ENCODE measurements at regions of chr9 and their contacts with region 1.

Region 1: DNA sequence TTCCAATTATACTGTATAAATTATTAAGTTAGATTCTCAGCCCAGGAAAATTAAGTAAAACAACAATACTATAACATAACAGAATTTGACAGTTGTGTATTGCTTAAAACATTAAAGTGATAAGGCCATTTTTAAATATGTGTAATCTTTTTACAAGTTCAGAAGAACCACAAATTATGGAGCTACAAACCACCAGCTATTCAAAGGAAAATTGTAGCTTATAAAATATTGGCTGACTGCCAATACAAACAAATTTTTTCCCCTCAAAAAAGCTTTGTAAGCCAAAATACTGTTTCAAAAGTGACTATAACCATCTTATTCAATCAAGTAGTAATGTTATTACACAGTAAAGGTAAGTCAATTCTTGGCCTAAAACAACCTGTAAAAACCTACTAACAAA is 21.9 kb downstream of the STRBP start:
- DNase-seq: no peak
- ATAC-seq: no peak
- H3K4me3 ChIP-seq: no peak overlapping the region
- H3K4me3 Mint-ChIP-seq: no peak overlapping the region
- H3K27ac ChIP-seq: peak overlapping the region in 1 of 2 donors; percentile 1
- H3K27ac Mint-ChIP-seq: no peak overlapping the region
- H3K4me1 ChIP-seq: peaks cover 12 to 35% of the 10 kb centered on the region in 2 donors
- H3K4me1 Mint-ChIP-seq: peaks cover 82% of the 10 kb centered on the region
- H3K27me3 ChIP-seq: no peaks in the 10 kb centered on the region
- H3K27me3 Mint-ChIP-seq: no peaks in the 10 kb centered on the region
- CTCF ChIP-seq: no peak

Region 2: DNA sequence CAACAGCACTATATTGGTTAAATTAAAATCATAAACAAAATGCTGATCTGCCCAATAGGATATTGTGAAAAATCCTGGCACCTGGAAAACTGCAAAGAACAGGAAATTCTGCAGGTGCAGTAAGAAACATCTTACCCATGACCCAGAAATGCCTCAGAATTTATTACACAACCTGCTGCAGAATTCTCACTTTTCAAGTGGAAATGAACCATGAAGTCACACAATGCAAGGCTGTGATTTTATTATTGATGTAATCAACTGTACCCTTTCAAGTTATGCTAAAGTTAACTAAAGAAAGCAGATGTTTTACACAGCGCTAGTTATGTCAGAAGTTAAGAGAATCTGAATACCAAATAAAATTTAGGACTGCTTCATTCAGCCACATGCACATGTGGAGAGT is 15.8 kb after region 1 on chr9:
- CTCF ChIA-PET with region 1: interaction called, 5 read pairs
- POLR2A ChIA-PET with region 1: no interaction called
- intact Hi-C with region 1: loop called (anchors 2 kb)
- DNase-seq: no peak
- ATAC-seq: no peak
- H3K4me3 ChIP-seq: no peak overlapping the region
- H3K4me3 Mint-ChIP-seq: no peak overlapping the region
- H3K27ac ChIP-seq: peak overlapping the region; percentile 1 to 46
- H3K27ac Mint-ChIP-seq: no peak overlapping the region
- H3K4me1 ChIP-seq: peaks cover 58 to 76% of the 10 kb centered on the region in 2 donors
- H3K4me1 Mint-ChIP-seq: peaks cover 86% of the 10 kb centered on the region
- H3K27me3 ChIP-seq: no peaks in the 10 kb centered on the region
- H3K27me3 Mint-ChIP-seq: no peaks in the 10 kb centered on the region
- CTCF ChIP-seq: no peak

Region 3: GRCh38 chr9:123375469-123376132 is 129.1 kb after region 1 on chr9:
- CTCF ChIA-PET with region 1: no interaction called
- POLR2A ChIA-PET with region 1: no interaction called
- intact Hi-C with region 1: no loop called
- DNase-seq: no peak
- ATAC-seq: no peak
- H3K4me3 ChIP-seq: no peak overlapping the region
- H3K4me3 Mint-ChIP-seq: no peak overlapping the region
- H3K27ac ChIP-seq: no peak overlapping the region
- H3K27ac Mint-ChIP-seq: no peak overlapping the region
- H3K4me1 ChIP-seq: peaks cover 0 to 9% of the 10 kb centered on the region in 2 donors
- H3K4me1 Mint-ChIP-seq: peaks cover 18% of the 10 kb centered on the region
- H3K27me3 ChIP-seq: peaks cover 0 to 44% (median 11%) of the 10 kb centered on the region in 4 experiments
- H3K27me3 Mint-ChIP-seq: peaks cover 29% of the 10 kb centered on the region
- CTCF ChIP-seq: no peak

Region 4: DNA sequence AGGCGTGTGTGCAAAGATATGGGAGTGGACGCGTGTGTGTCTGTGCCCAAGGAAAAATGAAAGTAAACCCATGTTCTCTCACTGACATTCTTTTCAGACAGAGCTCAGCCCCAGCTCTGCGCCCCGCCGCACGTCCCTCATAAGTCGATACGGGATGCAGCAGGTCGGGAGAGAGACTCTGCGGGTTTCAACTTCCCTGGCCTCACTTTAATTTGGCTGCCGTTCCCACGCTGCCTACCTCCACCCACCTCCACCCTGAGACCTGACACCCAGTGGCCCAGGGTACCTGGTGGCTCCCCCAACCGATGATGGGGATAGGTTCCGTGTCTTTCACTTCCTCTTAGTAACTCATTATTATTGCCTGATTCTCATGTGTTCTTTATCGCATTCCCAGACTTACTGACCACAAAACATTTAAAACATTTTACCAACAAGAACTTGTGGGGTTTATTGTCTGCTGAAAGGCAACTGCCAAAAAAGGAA is 784.5 kb after region 1 on chr9:
- CTCF ChIA-PET with region 1: no interaction called
- POLR2A ChIA-PET with region 1: no interaction called
- intact Hi-C with region 1: no loop called
- DNase-seq: no peak
- ATAC-seq: no peak
- H3K4me3 ChIP-seq: no peak overlapping the region
- H3K4me3 Mint-ChIP-seq: peak overlapping the region; percentile 39
- H3K27ac ChIP-seq: no peak overlapping the region
- H3K27ac Mint-ChIP-seq: no peak overlapping the region
- H3K4me1 ChIP-seq: peaks cover 0 to 3% of the 10 kb centered on the region in 2 donors
- H3K4me1 Mint-ChIP-seq: peaks cover 4% of the 10 kb centered on the region
- H3K27me3 ChIP-seq: peaks cover 0 to 44% (median 16%) of the 10 kb centered on the region in 4 experiments
- H3K27me3 Mint-ChIP-seq: peaks cover 53% of the 10 kb centered on the region
- CTCF ChIP-seq: no peak